ENCODE measurements at regions of chr2 and their contacts with region 1.

Region 1: DNA sequence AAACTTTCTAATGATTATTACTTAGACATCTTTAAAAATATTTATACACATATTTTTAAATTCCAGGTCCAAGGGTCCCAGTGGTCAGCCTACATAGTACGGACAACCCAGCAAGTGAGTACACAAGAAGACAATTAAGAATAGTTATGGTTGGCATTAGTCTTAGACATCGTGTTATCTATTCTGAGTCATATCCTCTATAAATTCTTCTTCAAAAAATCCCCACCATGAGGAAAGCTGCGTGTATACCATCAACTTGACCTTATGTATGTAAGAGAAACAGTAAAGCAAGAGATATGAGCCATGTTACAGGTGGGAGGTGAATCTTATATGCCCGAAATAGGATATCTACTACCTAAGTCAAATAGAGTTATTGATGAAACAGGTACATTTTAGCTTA is 1339.8 kb downstream of the DPP10 start:
- DNase-seq: no peak
- ATAC-seq: no peak
- H3K4me3 ChIP-seq: no peak overlapping the region
- H3K4me3 Mint-ChIP-seq: no peak overlapping the region
- H3K27ac ChIP-seq: no peak overlapping the region
- H3K27ac Mint-ChIP-seq: no peak overlapping the region
- H3K4me1 ChIP-seq: no peaks in the 10 kb centered on the region
- H3K4me1 Mint-ChIP-seq: no peaks in the 10 kb centered on the region
- H3K27me3 ChIP-seq: no peaks in the 10 kb centered on the region
- H3K27me3 Mint-ChIP-seq: no peaks in the 10 kb centered on the region
- CTCF ChIP-seq: no peak

Region 2: GRCh38 chr2:114579542-114579941 is 1202.7 kb before region 1 on chr2:
- CTCF ChIA-PET with region 1: no interaction called
- POLR2A ChIA-PET with region 1: no interaction called
- intact Hi-C with region 1: loop called in 1 of 2 experiments (anchors 10 kb)
- DNase-seq: no peak
- ATAC-seq: no peak
- H3K4me3 ChIP-seq: no peak overlapping the region
- H3K4me3 Mint-ChIP-seq: no peak overlapping the region
- H3K27ac ChIP-seq: no peak overlapping the region
- H3K27ac Mint-ChIP-seq: no peak overlapping the region
- H3K4me1 ChIP-seq: no peaks in the 10 kb centered on the region
- H3K4me1 Mint-ChIP-seq: no peaks in the 10 kb centered on the region
- H3K27me3 ChIP-seq: no peaks in the 10 kb centered on the region
- H3K27me3 Mint-ChIP-seq: peaks cover 2% of the 10 kb centered on the region
- CTCF ChIP-seq: no peak

Region 3: DNA sequence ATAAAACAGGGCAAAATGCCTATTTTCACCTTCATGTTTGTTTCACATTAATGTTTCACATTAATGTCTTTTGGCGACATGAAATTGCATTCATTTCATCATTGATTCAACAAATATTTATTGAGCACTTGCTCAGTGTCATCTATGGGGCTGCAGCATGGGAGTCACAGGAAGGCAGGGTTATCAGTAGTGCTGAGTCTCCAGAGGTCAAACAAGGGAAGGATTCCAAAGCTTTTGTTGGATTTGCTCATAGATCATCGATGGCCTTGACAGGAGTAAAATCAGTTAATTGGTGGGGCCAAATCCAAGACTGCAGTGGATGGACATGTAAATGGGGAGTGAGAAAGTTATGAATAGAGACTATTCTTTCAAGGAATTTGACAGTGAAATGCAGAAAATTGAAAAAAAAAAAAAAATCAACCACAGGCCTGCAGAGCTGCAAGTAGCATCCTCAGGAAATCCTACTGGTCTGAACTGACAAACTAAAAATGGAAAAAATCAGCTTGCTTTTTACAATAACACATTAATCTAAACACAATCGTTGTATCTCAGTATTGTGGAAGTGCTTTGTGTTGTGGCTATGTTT is 49.0 kb before region 1 on chr2:
- CTCF ChIA-PET with region 1: no interaction called
- POLR2A ChIA-PET with region 1: no interaction called
- intact Hi-C with region 1: loop called in 1 of 2 experiments (anchors 2 kb)
- DNase-seq: no peak
- ATAC-seq: no peak
- H3K4me3 ChIP-seq: no peak overlapping the region
- H3K4me3 Mint-ChIP-seq: no peak overlapping the region
- H3K27ac ChIP-seq: no peak overlapping the region
- H3K27ac Mint-ChIP-seq: no peak overlapping the region
- H3K4me1 ChIP-seq: no peaks in the 10 kb centered on the region
- H3K4me1 Mint-ChIP-seq: no peaks in the 10 kb centered on the region
- H3K27me3 ChIP-seq: no peaks in the 10 kb centered on the region
- H3K27me3 Mint-ChIP-seq: no peaks in the 10 kb centered on the region
- CTCF ChIP-seq: no peak

Region 4: DNA sequence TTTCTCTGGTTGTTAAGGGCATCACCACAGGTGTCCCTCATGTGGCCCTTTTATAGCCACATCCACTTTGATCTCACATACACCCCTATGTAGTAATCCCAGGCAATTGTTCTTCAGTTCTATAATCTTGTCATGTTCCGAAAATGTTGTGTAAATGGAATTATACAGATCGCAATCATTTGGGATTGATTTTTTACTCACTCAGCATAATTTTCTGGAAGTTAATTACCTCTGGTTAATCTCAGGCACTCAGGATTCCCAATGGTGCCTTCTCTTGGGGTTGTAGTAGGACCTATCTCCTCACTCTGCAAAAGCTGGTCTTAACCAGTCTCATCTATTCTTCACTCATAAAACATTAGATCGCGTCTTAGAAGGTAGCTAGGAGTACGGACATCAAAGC is 482.6 kb after region 1 on chr2:
- CTCF ChIA-PET with region 1: no interaction called
- POLR2A ChIA-PET with region 1: no interaction called
- intact Hi-C with region 1: no loop called
- DNase-seq: no peak
- ATAC-seq: no peak
- H3K4me3 ChIP-seq: no peak overlapping the region
- H3K4me3 Mint-ChIP-seq: no peak overlapping the region
- H3K27ac ChIP-seq: no peak overlapping the region
- H3K27ac Mint-ChIP-seq: no peak overlapping the region
- H3K4me1 ChIP-seq: no peaks in the 10 kb centered on the region
- H3K4me1 Mint-ChIP-seq: no peaks in the 10 kb centered on the region
- H3K27me3 ChIP-seq: no peaks in the 10 kb centered on the region
- H3K27me3 Mint-ChIP-seq: no peaks in the 10 kb centered on the region
- CTCF ChIP-seq: no peak